ENCODE measurements at regions of chr1 and their contacts with region 1.

Region 1: GRCh38 chr1:212368073-212368484 is 46.6 kb downstream of the PACC1 start:
- DNase-seq: peak; percentile 32 to 81
- ATAC-seq: peak; percentile 93 to 99 (median 95)
- H3K4me3 ChIP-seq: no peak overlapping the region
- H3K4me3 Mint-ChIP-seq: no peak overlapping the region
- H3K27ac ChIP-seq: no peak overlapping the region
- H3K27ac Mint-ChIP-seq: peak overlapping the region; percentile 75 to 77
- H3K4me1 ChIP-seq: no peaks in the 10 kb centered on the region
- H3K4me1 Mint-ChIP-seq: peaks cover 7 to 13% of the 10 kb centered on the region in 2 donors
- H3K27me3 ChIP-seq: no peaks in the 10 kb centered on the region
- H3K27me3 Mint-ChIP-seq: no peaks in the 10 kb centered on the region
- CTCF ChIP-seq: peak; percentile 74

Region 2: DNA sequence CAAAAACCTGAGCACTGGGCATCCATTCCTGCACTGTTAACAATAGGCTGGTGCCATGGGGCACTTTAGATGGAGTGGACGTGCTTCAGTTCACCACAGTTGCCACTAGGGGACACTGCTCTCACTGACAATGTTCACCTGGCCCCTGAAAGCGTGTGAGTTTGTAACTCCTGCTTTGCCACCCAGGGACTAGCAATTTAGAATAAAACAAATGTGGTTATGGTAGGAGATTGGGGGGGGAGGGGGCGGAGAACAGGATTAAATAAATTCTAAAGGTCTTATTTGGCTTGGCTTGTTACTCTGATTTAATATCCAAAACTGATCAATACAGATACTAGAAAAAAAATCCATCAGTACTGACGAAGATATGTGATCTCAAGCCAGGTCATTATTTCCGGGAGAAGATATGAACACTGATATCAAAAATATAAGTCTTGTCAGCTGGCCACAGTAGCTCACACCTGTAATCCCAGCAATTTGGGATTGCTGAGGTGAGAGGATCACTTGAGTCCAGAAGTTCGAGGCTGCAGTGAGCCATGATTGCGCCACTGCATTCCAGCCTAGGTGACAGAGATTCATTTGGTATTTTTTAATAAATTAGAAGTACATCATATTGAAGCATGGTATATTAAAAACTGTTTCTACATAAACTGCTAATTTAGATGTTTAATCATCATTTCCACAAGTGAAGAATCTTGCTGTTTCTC is 355.9 kb before region 1 on chr1:
- intact Hi-C with region 1: loop called (anchors 2 kb)
- DNase-seq: peak; percentile 39 to 82
- ATAC-seq: peak; percentile 93 to 100 (median 100)
- H3K4me3 ChIP-seq: no peak overlapping the region
- H3K4me3 Mint-ChIP-seq: no peak overlapping the region
- H3K27ac ChIP-seq: no peak overlapping the region
- H3K27ac Mint-ChIP-seq: peak overlapping the region in 1 of 2 donors; percentile 59
- H3K4me1 ChIP-seq: no peaks in the 10 kb centered on the region
- H3K4me1 Mint-ChIP-seq: peaks cover 0 to 6% of the 10 kb centered on the region in 2 donors
- H3K27me3 ChIP-seq: no peaks in the 10 kb centered on the region
- H3K27me3 Mint-ChIP-seq: no peaks in the 10 kb centered on the region
- CTCF ChIP-seq: peak; percentile 84

Region 3: DNA sequence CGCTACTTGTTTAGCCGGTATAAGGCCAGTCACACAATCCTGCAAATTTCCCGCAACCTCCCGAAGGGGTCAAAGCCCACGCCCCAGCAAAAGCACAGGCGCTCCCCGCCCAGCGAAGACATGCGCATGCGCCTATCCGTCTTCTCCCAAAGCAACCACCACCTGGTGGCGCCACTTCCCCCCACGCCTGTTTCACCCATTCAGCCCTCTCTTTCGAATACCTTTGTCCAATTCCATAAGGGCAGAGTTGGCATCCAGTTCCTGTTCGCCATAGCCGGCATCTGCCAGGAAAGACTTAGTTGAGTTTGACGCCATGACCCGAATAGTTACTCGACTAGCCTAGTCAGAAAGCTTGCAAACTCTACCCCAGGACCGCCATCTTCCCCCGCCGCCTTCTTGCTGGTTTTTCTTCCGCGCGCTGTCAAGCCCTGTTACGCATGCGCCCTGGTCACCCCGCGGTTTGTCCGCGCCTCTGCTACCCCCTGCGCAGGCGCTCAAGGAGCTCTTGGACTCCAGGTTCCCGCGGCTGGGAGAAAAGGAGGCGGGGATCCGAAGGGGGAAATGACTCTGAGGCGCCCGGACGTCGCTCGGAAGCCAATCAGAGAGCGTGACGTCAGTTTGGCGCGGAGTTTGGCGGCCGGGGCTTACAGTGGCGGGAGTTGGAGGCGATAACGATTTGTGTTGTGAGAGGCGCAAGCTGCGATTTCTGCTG is 332.8 kb before region 1 on chr1 and contains the starts of genes DTL and INTS7:
- intact Hi-C with region 1: loop called (anchors 1 kb)
- DNase-seq: peak; percentile 95 to 100
- ATAC-seq: peak; percentile 89 to 94 (median 90)
- H3K4me3 ChIP-seq: peak within 1 kb of the TSS; percentile 75
- H3K4me3 Mint-ChIP-seq: peak within 1 kb of the TSS; percentile 96
- H3K27ac ChIP-seq: peak within 1 kb of the TSS; percentile 65
- H3K27ac Mint-ChIP-seq: peak within 1 kb of the TSS; percentile 94 to 98
- H3K4me1 ChIP-seq: peaks cover 14% of the 10 kb centered on the region
- H3K4me1 Mint-ChIP-seq: peaks cover 42 to 51% of the 10 kb centered on the region in 2 donors
- H3K27me3 ChIP-seq: no peaks in the 10 kb centered on the region
- H3K27me3 Mint-ChIP-seq: no peaks in the 10 kb centered on the region
- CTCF ChIP-seq: peak; percentile 95
- total RNA-seq, gene DTL: 1.1 to 4.0 (median 3.3) TPM
- total RNA-seq, gene INTS7: 10.0 to 20.3 (median 11.0) TPM

Region 4: GRCh38 chr1:212062832-212063438 is 305.1 kb before region 1 on chr1:
- intact Hi-C with region 1: loop called (anchors 2 kb)
- DNase-seq: peak in 1 of 2 donors; percentile 62
- ATAC-seq: peak in 2 of 3 donors; percentile 60 to 67
- H3K4me3 ChIP-seq: no peak overlapping the region
- H3K4me3 Mint-ChIP-seq: no peak overlapping the region
- H3K27ac ChIP-seq: no peak overlapping the region
- H3K27ac Mint-ChIP-seq: no peak overlapping the region
- H3K4me1 ChIP-seq: no peaks in the 10 kb centered on the region
- H3K4me1 Mint-ChIP-seq: no peaks in the 10 kb centered on the region
- H3K27me3 ChIP-seq: no peaks in the 10 kb centered on the region
- H3K27me3 Mint-ChIP-seq: no peaks in the 10 kb centered on the region
- CTCF ChIP-seq: peak; percentile 90

Region 5: DNA sequence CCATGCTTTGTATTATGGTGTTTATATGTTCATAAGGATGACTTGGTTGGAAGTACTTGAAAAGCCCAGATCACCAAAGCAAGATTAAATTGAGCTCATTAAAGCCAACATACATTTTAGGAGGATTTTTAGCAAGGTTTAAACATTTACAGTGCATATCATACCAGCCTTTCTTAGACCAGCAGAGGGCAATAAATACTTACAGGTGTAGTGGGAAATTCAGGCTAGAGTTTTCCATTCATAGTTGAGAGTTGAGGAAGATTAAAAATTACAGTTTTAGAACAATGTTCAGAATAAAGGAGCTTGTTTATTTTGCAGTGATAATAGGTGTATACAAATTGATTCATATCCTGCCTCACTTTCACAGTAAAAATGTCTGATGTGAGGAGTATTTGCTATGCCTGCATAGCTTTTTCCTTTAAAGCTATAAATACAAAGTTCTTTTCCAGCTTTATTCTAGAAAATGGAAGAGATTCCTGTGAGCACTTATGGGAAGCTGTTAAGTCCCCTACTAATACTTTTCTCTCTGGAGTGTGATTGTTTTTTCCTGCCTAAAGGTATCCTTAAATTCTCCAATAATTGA is 297.3 kb before region 1 on chr1:
- intact Hi-C with region 1: loop called (anchors 1 kb)
- DNase-seq: peak in 1 of 2 donors; percentile 71
- ATAC-seq: peak in 2 of 3 donors; percentile 72 to 75
- H3K4me3 ChIP-seq: no peak overlapping the region
- H3K4me3 Mint-ChIP-seq: no peak overlapping the region
- H3K27ac ChIP-seq: no peak overlapping the region
- H3K27ac Mint-ChIP-seq: no peak overlapping the region
- H3K4me1 ChIP-seq: no peaks in the 10 kb centered on the region
- H3K4me1 Mint-ChIP-seq: no peaks in the 10 kb centered on the region
- H3K27me3 ChIP-seq: no peaks in the 10 kb centered on the region
- H3K27me3 Mint-ChIP-seq: no peaks in the 10 kb centered on the region
- CTCF ChIP-seq: peak; percentile 80

Measured in natural killer cell (primary cell).